Activated CD4-positive, alpha-beta memory T cell treated with anti-CD3 and anti-CD28 coated beads for 36 hours (primary cell): ENCODE measurements at regions of chr5 and their contacts with region 1.

Region 1: GRCh38 chr5:140401362-140402257 is at the start of gene ANKHD1:
- DNase-seq: peak; percentile 99
- H3K4me3 Mint-ChIP-seq: no peak within 1 kb of the TSS
- H3K27ac Mint-ChIP-seq: no peak within 1 kb of the TSS
- H3K4me1 Mint-ChIP-seq: peaks cover 31% of the 10 kb centered on the region
- H3K27me3 Mint-ChIP-seq: no peaks in the 10 kb centered on the region
- total RNA-seq, gene ANKHD1: 102 to 105 TPM

Region 2: DNA sequence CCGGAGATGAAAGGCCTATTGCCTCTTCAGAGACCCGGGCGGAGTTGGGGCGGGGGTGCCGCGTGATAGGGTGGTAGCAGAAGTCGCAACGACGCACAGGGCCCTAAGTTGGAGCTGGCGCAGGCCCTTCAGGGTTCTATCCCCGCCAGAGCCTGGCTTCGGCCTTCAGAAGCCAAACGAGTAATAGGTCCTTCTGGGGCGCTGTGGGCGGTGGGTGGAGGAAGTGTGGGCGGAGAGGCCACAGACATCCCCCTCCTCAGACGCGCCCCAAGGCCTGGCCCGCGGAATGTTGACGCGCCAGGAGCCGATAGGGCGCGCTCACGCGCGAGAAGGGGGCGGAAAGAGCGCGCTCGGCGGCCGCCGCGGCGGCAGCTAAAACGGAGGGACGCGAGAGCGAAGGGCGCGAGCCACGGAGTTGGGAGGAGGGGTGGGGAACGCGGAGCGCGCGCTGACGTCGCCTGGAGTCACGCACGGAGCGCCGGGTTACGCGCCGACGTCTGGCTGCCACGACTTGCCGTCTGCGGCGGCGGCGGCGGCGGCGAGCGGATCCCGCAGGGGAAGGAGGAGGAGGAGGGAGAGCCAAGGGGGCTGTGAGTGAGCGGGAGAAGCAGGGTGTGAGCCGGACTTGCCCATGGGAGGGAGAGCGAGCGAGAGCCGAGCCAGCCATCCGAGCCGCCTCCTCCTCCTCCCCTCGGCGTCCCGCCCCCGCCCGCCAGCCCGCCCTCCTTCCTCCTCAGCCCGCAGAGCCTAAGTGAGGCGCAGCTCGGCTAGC is 294.1 kb before region 1 on chr5:
- CTCF ChIA-PET with region 1: interaction called, 5 read pairs
- POLR2A ChIA-PET with region 1: no interaction called
- intact Hi-C with region 1: loop called (anchors 2 kb)
- DNase-seq: peak; percentile 95
- H3K4me3 Mint-ChIP-seq: peak overlapping the region; percentile 98
- H3K27ac Mint-ChIP-seq: peak overlapping the region; percentile 94
- H3K4me1 Mint-ChIP-seq: peaks cover 43% of the 10 kb centered on the region
- H3K27me3 Mint-ChIP-seq: no peaks in the 10 kb centered on the region

Region 3: DNA sequence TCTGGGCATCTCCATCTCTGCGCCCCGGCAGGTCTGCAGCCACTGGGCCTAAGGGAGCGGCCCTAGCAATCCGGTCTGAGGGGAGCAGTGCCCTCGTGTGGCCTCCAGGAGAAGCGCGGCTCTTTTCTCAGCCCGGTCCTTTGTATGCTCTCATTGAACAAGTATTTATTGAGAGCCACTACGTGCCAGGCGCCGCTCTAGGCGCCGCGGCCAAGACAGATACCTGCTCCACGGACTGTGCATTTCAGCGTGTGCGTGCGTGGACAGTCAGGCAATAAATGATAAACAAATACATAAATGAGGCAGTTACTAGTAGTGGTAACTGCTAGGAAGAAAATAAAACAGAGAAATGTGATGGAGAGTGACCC is 43.9 kb before region 1 on chr5:
- CTCF ChIA-PET with region 1: interaction called, 4 read pairs
- POLR2A ChIA-PET with region 1: no interaction called
- intact Hi-C with region 1: loop called (anchors 2 kb)
- DNase-seq: peak; percentile 89
- H3K4me3 Mint-ChIP-seq: peak overlapping the region; percentile 66
- H3K27ac Mint-ChIP-seq: no peak overlapping the region
- H3K4me1 Mint-ChIP-seq: peaks cover 14% of the 10 kb centered on the region
- H3K27me3 Mint-ChIP-seq: peaks cover 5% of the 10 kb centered on the region

Region 4: DNA sequence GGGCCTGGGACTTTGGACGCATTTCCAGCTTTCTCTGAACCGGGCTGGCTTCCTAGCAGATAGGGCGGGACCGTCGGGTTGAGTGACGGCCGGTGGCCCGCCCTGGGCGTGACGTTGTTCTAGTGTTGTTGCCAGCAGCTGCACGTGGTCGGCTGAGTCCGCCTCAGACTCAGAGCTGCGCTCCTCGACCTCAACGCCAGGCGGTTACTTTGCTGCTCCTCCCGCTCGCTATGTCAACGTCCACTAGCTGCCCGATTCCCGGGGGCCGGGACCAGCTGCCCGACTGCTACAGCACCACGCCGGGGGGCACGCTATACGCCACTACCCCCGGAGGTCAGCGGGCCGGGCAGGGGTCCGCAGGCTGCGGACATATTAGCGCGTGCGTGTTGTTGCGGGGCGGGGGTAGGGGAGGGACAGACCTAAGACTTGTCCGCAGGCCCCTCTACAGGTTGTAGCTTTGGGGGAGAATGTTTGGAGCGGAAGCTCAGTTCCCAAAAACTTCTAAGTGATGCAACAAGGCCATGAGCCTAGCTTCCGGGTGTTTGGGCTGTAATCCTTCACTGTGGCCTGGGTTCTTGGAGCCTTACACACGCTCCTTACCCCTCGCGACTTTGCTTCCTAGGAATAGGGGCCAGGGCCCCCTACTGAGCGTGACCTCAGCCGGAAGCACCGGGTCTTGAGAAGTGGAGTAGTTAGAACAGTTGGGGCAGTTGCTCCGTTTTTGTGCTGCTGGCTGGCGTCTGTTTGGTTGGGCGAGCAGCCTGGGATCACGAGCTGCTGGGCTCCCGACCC is 146.1 kb after region 1 on chr5 and contains the start of gene EIF4EBP3:
- CTCF ChIA-PET with region 1: interaction called, 5 read pairs
- POLR2A ChIA-PET with region 1: interaction called, 10 read pairs
- intact Hi-C with region 1: no loop called
- DNase-seq: peak; percentile 91
- H3K4me3 Mint-ChIP-seq: peak within 1 kb of the TSS; percentile 76
- H3K27ac Mint-ChIP-seq: peak within 1 kb of the TSS; percentile 90
- H3K4me1 Mint-ChIP-seq: peaks cover 44% of the 10 kb centered on the region
- H3K27me3 Mint-ChIP-seq: no peaks in the 10 kb centered on the region
- total RNA-seq, gene EIF4EBP3: 15.7 to 16.6 TPM

Region 5: DNA sequence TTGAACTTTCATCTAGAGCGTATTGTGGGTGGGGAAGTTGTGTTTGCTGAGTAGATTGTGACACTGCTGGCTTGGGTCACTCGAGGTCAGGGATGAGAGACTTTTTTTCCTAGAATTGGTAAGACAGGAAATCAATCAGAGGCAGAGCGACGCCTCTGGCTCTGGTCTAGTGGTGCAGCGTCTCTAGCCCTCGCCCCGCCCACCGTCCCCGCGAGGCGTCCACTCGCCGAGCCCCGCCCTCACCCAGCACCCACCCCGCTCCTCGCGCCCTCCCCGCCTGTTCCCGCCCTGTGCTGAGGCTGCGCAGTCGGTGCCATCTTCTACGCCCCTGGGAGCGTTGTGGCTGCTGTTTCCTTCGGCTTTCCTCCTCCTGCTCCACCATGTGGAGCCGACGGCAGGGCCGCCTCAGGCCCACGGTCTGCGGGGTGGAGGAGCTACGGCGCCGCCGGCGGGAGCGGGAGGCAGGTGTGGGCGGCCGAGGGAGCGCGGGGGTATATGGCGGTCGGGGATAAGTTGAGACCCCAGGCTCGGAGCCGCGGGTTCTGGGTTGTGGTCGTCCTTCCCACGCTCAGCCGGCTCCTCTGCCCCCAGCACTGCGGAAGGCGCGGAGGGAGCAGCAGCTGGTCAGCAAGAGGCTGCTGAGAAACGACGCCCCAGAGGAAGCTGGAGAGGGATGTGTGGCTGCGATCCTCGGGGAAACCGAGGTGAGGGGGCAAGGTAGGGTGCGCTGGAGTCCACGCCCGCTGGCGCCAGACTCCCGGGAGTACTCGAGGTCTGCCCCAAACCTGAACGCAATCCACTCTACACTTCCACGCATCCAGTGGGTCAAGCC is 237.8 kb after region 1 on chr5 and contains the start of gene TMCO6:
- CTCF ChIA-PET with region 1: interaction called, 5 read pairs
- POLR2A ChIA-PET with region 1: interaction called, 3 read pairs
- intact Hi-C with region 1: loop called (anchors 1 kb)
- DNase-seq: peak; percentile 99
- H3K4me3 Mint-ChIP-seq: peak within 1 kb of the TSS; percentile 85
- H3K27ac Mint-ChIP-seq: peak within 1 kb of the TSS; percentile 94
- H3K4me1 Mint-ChIP-seq: peaks cover 41% of the 10 kb centered on the region
- H3K27me3 Mint-ChIP-seq: no peaks in the 10 kb centered on the region
- total RNA-seq, gene TMCO6: 33.7 to 33.8 TPM

Region 6: DNA sequence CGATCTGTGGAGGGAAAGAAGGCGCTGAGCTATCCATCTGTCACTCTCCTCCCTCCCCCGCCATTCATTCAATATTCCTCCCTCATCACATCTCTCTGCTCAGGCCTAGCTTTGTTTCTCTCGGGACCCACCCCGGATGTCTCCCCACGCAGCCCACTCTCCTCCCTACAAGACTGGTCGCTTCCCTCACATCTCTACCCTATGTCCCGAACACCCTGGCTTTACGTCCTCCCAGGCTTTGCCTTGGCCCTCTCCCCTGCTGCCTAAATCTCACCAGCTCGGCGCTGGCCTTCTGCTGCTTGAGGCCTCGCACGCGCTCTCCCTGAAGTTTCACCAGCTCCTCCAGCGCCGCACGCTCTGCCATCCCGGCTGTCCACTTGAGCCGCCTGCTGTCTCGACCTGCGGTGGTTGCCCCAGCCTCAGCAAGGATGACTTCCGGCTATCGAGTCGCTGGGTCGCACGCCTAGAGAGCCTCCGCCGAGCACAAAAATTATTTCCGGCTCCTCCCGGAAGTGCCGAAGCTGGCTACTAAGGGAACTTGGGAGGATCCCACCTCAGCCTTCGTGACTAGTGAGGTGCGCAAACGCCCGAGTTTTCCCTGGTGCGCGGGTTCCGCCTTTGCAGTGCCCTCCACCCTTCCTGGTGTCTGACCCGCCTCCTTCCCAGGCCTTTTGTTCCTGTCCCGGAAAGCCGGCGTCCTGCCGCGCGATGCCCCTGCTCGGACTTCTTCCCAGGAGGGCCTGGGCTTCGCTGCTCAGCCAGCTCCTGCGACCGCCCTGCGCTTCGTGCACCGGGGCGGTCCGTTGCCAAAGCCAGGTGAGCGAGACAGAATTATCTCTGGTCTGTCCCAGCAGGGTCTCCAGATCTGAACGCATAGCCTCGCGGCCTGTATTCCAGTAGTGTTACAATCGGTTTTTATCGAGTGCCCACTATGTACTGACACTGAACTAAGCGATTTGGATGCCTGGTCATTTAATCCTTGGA is 289.6 kb after region 1 on chr5 and contains the starts of genes HARS1 and HARS2:
- CTCF ChIA-PET with region 1: interaction called, 3 read pairs
- POLR2A ChIA-PET with region 1: interaction called, 6 read pairs
- intact Hi-C with region 1: loop called (anchors 1 kb)
- DNase-seq: peak; percentile 92
- H3K4me3 Mint-ChIP-seq: peak within 1 kb of the TSS; percentile 100
- H3K27ac Mint-ChIP-seq: peak within 1 kb of the TSS; percentile 99
- H3K4me1 Mint-ChIP-seq: peaks cover 40% of the 10 kb centered on the region
- H3K27me3 Mint-ChIP-seq: no peaks in the 10 kb centered on the region
- total RNA-seq, gene HARS1: 91.1 to 91.7 TPM
- total RNA-seq, gene HARS2: 26.9 to 28.9 TPM